CD8-positive, alpha-beta memory T cell (primary cell): ENCODE measurements at regions of chr18 and their contacts with region 1.

Region 1: GRCh38 chr18:48913201-48913600 is 37.6 kb downstream of the SMAD7 start:
- DNase-seq: peak; percentile 20 to 78 (median 51)
- H3K4me3 ChIP-seq: no peak overlapping the region
- H3K4me3 Mint-ChIP-seq: peak overlapping the region in 1 of 7 donors; percentile 10
- H3K27ac ChIP-seq: no peak overlapping the region
- H3K27ac Mint-ChIP-seq: peak overlapping the region in 5 of 8 donors; percentile 9 to 83 (median 62)
- H3K4me1 ChIP-seq: peaks cover 21% of the 10 kb centered on the region
- H3K4me1 Mint-ChIP-seq: peaks cover 27 to 45% (median 40%) of the 10 kb centered on the region in 3 donors
- H3K27me3 ChIP-seq: no peaks in the 10 kb centered on the region
- H3K27me3 Mint-ChIP-seq: no peaks in the 10 kb centered on the region

Region 2: GRCh38 chr18:48777026-48777743 is 136.0 kb before region 1 on chr18:
- CTCF ChIA-PET with region 1: interaction called, 57 read pairs
- POLR2A ChIA-PET with region 1: no interaction called
- DNase-seq: peak; percentile 62 to 78 (median 68)
- H3K4me3 ChIP-seq: no peak overlapping the region
- H3K4me3 Mint-ChIP-seq: no peak overlapping the region
- H3K27ac ChIP-seq: no peak overlapping the region
- H3K27ac Mint-ChIP-seq: peak overlapping the region in 3 of 8 donors; percentile 27 to 87 (median 36)
- H3K4me1 ChIP-seq: peaks cover 6% of the 10 kb centered on the region
- H3K4me1 Mint-ChIP-seq: peaks cover 0 to 23% (median 6%) of the 10 kb centered on the region in 3 donors
- H3K27me3 ChIP-seq: no peaks in the 10 kb centered on the region
- H3K27me3 Mint-ChIP-seq: peaks cover 2 to 3% of the 10 kb centered on the region in 2 donors

Region 3: GRCh38 chr18:50240083-50240563 is 1326.9 kb after region 1 on chr18:
- CTCF ChIA-PET with region 1: no interaction called
- POLR2A ChIA-PET with region 1: interaction called, 11 read pairs
- DNase-seq: no peak
- H3K4me3 ChIP-seq: no peak overlapping the region
- H3K4me3 Mint-ChIP-seq: no peak overlapping the region
- H3K27ac ChIP-seq: no peak overlapping the region
- H3K27ac Mint-ChIP-seq: no peak overlapping the region
- H3K4me1 ChIP-seq: no peaks in the 10 kb centered on the region
- H3K4me1 Mint-ChIP-seq: no peaks in the 10 kb centered on the region
- H3K27me3 ChIP-seq: peaks cover 3% of the 10 kb centered on the region
- H3K27me3 Mint-ChIP-seq: peaks cover 19 to 50% of the 10 kb centered on the region in 2 donors